CD8-positive, alpha-beta T cell (primary cell): ENCODE measurements at regions of chr2 and their contacts with region 1.

Region 1: GRCh38 chr2:160332318-160332717 is 132.2 kb upstream of the ITGB6 start:
- DNase-seq: peak in 3 of 9 experiments; percentile 13 to 55 (median 31)
- ATAC-seq: peak; percentile 42
- H3K4me3 ChIP-seq: no peak overlapping the region
- H3K4me3 Mint-ChIP-seq: peak overlapping the region; percentile 7
- H3K27ac ChIP-seq: no peak overlapping the region
- H3K27ac Mint-ChIP-seq: peak overlapping the region; percentile 77
- H3K4me1 ChIP-seq: peaks cover 74% of the 10 kb centered on the region
- H3K4me1 Mint-ChIP-seq: peaks cover 91% of the 10 kb centered on the region
- H3K27me3 ChIP-seq: no peaks in the 10 kb centered on the region
- H3K27me3 Mint-ChIP-seq: no peaks in the 10 kb centered on the region
- CTCF ChIP-seq: no peak

Region 2: GRCh38 chr2:160347269-160347863 is 15.0 kb after region 1 on chr2:
- CTCF ChIA-PET with region 1: interaction called, 3 read pairs
- POLR2A ChIA-PET with region 1: no interaction called
- intact Hi-C with region 1: loop called in 1 of 2 experiments (anchors 2 kb)
- DNase-seq: no peak
- ATAC-seq: no peak
- H3K4me3 ChIP-seq: no peak overlapping the region
- H3K4me3 Mint-ChIP-seq: no peak overlapping the region
- H3K27ac ChIP-seq: no peak overlapping the region
- H3K27ac Mint-ChIP-seq: no peak overlapping the region
- H3K4me1 ChIP-seq: peaks cover 31% of the 10 kb centered on the region
- H3K4me1 Mint-ChIP-seq: peaks cover 74% of the 10 kb centered on the region
- H3K27me3 ChIP-seq: no peaks in the 10 kb centered on the region
- H3K27me3 Mint-ChIP-seq: no peaks in the 10 kb centered on the region
- CTCF ChIP-seq: no peak

Region 3: DNA sequence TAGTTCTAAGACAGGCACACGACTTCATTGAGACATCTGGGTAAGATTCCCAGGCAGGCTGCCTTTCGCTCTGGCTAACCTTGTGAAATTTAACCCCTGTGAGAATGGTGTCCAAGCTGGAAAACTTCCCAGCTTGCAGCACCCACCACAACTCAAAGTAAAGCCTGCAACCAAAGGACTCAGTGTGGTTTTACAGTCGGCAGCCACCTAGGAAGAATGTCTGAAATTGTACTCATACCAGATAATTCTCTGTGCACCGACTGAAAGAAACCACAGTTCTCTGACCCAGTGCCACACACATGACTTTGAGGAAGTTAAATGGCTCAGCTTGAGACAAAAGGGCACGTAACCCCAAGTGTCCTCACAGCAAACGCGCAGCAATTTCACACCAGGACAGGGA is 35.6 kb after region 1 on chr2:
- CTCF ChIA-PET with region 1: no interaction called
- POLR2A ChIA-PET with region 1: no interaction called
- intact Hi-C with region 1: loop called in 1 of 2 experiments (anchors 1 kb)
- DNase-seq: peak in 2 of 9 experiments; percentile 17 to 33
- ATAC-seq: peak; percentile 36
- H3K4me3 ChIP-seq: no peak overlapping the region
- H3K4me3 Mint-ChIP-seq: peak overlapping the region; percentile 32
- H3K27ac ChIP-seq: peak overlapping the region in 1 of 2 experiments; percentile 21
- H3K27ac Mint-ChIP-seq: peak overlapping the region; percentile 37
- H3K4me1 ChIP-seq: peaks cover 43% of the 10 kb centered on the region
- H3K4me1 Mint-ChIP-seq: peaks cover 86% of the 10 kb centered on the region
- H3K27me3 ChIP-seq: no peaks in the 10 kb centered on the region
- H3K27me3 Mint-ChIP-seq: no peaks in the 10 kb centered on the region
- CTCF ChIP-seq: no peak

Region 4: GRCh38 chr2:160522951-160523710 is 190.8 kb after region 1 on chr2:
- CTCF ChIA-PET with region 1: no interaction called
- POLR2A ChIA-PET with region 1: no interaction called
- intact Hi-C with region 1: no loop called
- DNase-seq: no peak
- ATAC-seq: no peak
- H3K4me3 ChIP-seq: no peak overlapping the region
- H3K4me3 Mint-ChIP-seq: no peak overlapping the region
- H3K27ac ChIP-seq: no peak overlapping the region
- H3K27ac Mint-ChIP-seq: no peak overlapping the region
- H3K4me1 ChIP-seq: no peaks in the 10 kb centered on the region
- H3K4me1 Mint-ChIP-seq: no peaks in the 10 kb centered on the region
- H3K27me3 ChIP-seq: no peaks in the 10 kb centered on the region
- H3K27me3 Mint-ChIP-seq: no peaks in the 10 kb centered on the region
- CTCF ChIP-seq: no peak